ENCODE measurements at regions of chr11 and their contacts with region 1.

Region 1: GRCh38 chr11:48109046-48109666 is 107.5 kb upstream of the OR4B1 start:
- DNase-seq: peak in 1 of 2 experiments; percentile 27
- H3K4me3 ChIP-seq: no peak overlapping the region
- H3K4me3 Mint-ChIP-seq: no peak overlapping the region
- H3K27ac Mint-ChIP-seq: no peak overlapping the region
- H3K4me1 ChIP-seq: peaks cover 11% of the 10 kb centered on the region; the same call in 1 of the 2 replicates
- H3K4me1 Mint-ChIP-seq: peaks cover 7% of the 10 kb centered on the region
- H3K27me3 ChIP-seq: no peaks in the 10 kb centered on the region
- H3K27me3 Mint-ChIP-seq: no peaks in the 10 kb centered on the region
- CTCF ChIP-seq: peak; percentile 30 to 44

Region 2: DNA sequence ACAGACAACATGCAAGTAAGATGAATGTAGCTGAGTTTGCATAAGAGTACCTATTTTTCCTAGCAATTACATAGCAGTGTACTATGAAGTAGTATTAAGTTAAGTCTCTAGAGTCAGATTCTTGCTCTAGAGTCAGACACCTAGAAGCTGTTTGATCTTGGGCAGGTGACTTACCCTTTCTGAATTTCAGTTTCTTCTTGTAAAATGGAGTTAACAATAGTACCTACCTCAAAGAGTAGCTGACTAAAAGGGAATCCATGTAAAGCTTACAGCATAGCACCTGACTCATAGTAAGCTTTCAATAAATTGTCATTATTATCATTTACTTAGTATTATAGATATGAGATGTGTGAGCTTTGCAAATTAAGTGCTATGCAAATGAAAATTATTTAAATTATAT is 176.6 kb before region 1 on chr11:
- CTCF ChIA-PET with region 1: interaction called, 14 read pairs
- POLR2A ChIA-PET with region 1: no interaction called
- intact Hi-C with region 1: loop called (anchors 1 kb)
- DNase-seq: no peak
- H3K4me3 ChIP-seq: no peak overlapping the region
- H3K4me3 Mint-ChIP-seq: no peak overlapping the region
- H3K27ac Mint-ChIP-seq: no peak overlapping the region
- H3K4me1 ChIP-seq: no peaks in the 10 kb centered on the region
- H3K4me1 Mint-ChIP-seq: no peaks in the 10 kb centered on the region
- H3K27me3 ChIP-seq: no peaks in the 10 kb centered on the region
- H3K27me3 Mint-ChIP-seq: no peaks in the 10 kb centered on the region
- CTCF ChIP-seq: no peak

Region 3: GRCh38 chr11:47991266-47991830 is 117.8 kb before region 1 on chr11:
- CTCF ChIA-PET with region 1: no interaction called
- POLR2A ChIA-PET with region 1: no interaction called
- intact Hi-C with region 1: no loop called
- DNase-seq: no peak
- H3K4me3 ChIP-seq: no peak overlapping the region
- H3K4me3 Mint-ChIP-seq: no peak overlapping the region
- H3K27ac Mint-ChIP-seq: no peak overlapping the region
- H3K4me1 ChIP-seq: peaks cover 29% of the 10 kb centered on the region
- H3K4me1 Mint-ChIP-seq: peaks cover 11% of the 10 kb centered on the region
- H3K27me3 ChIP-seq: no peaks in the 10 kb centered on the region
- H3K27me3 Mint-ChIP-seq: no peaks in the 10 kb centered on the region
- CTCF ChIP-seq: no peak